Sigmoid colon (tissue), 7 donors: ENCODE measurements at regions of chr1 and their contacts with region 1.

Region 1: DNA sequence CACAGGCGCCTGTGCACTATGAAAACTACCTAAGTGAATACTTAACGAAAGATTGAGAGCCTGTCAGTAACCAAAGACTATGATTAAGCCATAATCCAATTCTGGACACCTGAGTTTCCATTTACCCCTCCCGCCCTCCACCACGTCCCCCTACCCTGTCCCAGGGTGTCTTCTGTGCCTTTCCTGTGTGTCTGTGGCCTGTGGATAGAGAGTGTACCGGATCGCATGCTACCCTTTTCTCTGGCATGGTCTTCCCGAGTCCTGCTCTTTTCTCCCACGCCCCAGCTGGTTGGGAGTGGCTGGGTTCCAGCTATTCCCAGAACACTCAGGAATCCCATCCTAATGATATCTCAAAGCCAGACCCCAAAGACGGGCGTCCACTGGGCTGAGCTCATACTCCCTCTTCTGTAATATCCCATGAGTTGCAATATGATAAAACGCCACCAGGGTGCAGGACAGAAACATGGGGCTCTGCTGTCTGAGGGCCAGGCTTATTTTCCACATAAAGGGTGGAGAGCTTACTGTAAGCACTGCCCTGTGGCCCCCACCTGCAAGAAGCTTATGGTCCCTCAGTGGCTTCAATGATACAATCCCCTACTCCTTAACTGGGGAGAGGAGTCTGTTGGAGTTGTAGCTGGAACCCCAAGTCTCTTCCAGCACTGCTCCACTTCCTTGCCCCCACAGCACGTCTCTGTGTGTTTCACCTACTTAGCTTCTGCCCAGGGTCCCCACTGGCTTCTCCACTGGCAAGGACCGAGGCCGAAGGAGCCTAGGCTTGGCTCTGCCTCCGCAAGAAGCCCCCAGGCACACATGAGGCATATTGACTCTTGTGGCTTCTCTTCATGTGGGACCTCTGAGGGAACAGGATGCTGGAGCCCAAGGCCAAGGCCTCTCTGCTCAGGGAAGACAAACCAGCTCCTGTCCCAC is 17.6 kb upstream of the ALX3 start:
- DNase-seq: no peak
- H3K4me3 ChIP-seq: no peak overlapping the region
- H3K27ac ChIP-seq: no peak overlapping the region
- H3K4me1 ChIP-seq: peaks cover 0 to 14% (median 11%) of the 10 kb centered on the region in 4 donors
- H3K27me3 ChIP-seq: peaks cover 0 to 9% (median 0%) of the 10 kb centered on the region in 3 donors
- CTCF ChIP-seq: peak; percentile 40 to 74 (median 62)
- EP300 ChIP-seq: no peak
- POLR2A ChIP-seq: no peak

Region 2: GRCh38 chr1:110040548-110040947 is 47.5 kb before region 1 on chr1:
- intact Hi-C with region 1: no loop called
- DNase-seq: no peak
- H3K4me3 ChIP-seq: no peak overlapping the region
- H3K27ac ChIP-seq: no peak overlapping the region
- H3K4me1 ChIP-seq: peaks cover 0 to 20% (median 9%) of the 10 kb centered on the region in 4 donors
- H3K27me3 ChIP-seq: no peaks in the 10 kb centered on the region
- CTCF ChIP-seq: no peak
- EP300 ChIP-seq: no peak
- POLR2A ChIP-seq: no peak

Region 3: DNA sequence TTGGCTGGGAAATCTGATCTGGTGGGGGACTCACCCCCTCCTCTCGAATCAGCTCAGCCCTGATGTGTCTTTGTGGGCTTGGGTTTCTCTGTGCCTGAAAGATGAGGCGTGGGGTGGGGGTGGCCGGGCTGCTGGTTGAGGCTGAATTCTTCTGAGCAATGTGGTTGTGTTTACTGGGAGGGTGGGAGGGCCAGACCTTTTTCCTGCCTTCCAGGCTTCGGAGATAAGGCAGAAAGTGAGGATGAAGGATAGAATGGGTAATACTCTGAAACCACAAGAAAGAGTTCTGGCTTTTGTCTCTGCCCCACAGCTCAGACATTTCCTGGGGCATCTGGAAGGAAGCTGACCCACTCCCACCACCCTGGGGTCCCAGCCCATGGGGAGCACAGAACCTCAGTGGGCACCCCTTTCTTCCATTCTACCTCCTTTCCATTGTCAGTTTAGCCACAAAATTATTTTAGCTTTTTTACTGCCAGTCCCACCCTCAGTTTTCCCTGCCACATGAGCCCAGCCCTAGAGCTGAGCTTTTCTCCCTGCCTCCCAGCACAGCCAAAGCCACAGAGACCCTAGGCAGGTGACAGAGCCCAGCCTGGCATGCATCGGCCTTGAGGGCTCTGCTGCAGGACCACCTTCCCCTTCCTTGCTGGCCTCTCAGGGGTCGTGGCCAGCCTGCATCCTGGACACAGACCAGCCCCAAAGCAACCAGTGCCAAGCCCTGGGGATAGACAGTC is 28.8 kb before region 1 on chr1:
- intact Hi-C with region 1: loop called (anchors 1 kb)
- DNase-seq: no peak
- H3K4me3 ChIP-seq: no peak overlapping the region
- H3K27ac ChIP-seq: no peak overlapping the region
- H3K4me1 ChIP-seq: peaks cover 0 to 29% (median 18%) of the 10 kb centered on the region in 4 donors
- H3K27me3 ChIP-seq: no peaks in the 10 kb centered on the region
- CTCF ChIP-seq: no peak
- EP300 ChIP-seq: no peak
- POLR2A ChIP-seq: no peak

Region 4: GRCh38 chr1:110106013-110106941 is 18.2 kb after region 1 on chr1:
- intact Hi-C with region 1: loop called (anchors 2 kb)
- DNase-seq: peak; percentile 82
- H3K4me3 ChIP-seq: no peak overlapping the region
- H3K27ac ChIP-seq: no peak overlapping the region
- H3K4me1 ChIP-seq: no peaks in the 10 kb centered on the region
- H3K27me3 ChIP-seq: no peaks in the 10 kb centered on the region
- CTCF ChIP-seq: peak; percentile 77 to 90 (median 80)
- EP300 ChIP-seq: no peak
- POLR2A ChIP-seq: no peak

Region 5: GRCh38 chr1:110214516-110215379 is 126.7 kb after region 1 on chr1:
- intact Hi-C with region 1: no loop called
- DNase-seq: no peak
- H3K4me3 ChIP-seq: no peak overlapping the region
- H3K27ac ChIP-seq: no peak overlapping the region
- H3K4me1 ChIP-seq: peaks cover 0 to 23% (median 14%) of the 10 kb centered on the region in 4 donors
- H3K27me3 ChIP-seq: peaks cover 0 to 15% (median 0%) of the 10 kb centered on the region in 3 donors
- CTCF ChIP-seq: no peak
- EP300 ChIP-seq: no peak
- POLR2A ChIP-seq: no peak